Vagina (tissue), 2 donors: ENCODE measurements at regions of chr7 and their contacts with region 1.

Region 1: DNA sequence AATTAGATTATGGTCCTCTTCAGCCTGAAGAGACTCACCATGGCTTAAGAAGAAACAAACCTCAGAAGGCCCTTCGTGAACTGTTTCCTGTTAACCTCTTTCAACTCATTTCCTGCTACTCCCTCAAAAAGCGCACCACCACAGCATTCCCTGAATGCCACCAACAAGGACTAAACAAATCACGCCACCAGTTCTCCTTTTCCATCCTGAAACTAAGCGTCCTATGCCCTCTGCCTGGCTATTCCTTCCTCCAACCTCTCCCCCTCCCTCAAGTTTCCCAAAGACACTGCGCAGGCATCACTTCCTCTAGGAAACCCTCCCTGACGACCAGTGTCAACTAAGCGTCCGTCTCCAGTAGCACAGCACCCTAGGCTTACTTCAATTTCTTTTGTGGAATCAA is 12.0 kb downstream of the YWHAG start:
- DNase-seq: no peak
- H3K4me3 ChIP-seq: no peak overlapping the region
- H3K27ac ChIP-seq: no peak overlapping the region
- H3K4me1 ChIP-seq: peaks cover 31% of the 10 kb centered on the region
- H3K27me3 ChIP-seq: no peaks in the 10 kb centered on the region
- CTCF ChIP-seq: no peak
- POLR2A ChIP-seq: no peak

Region 2: GRCh38 chr7:75696263-75697037 is 650.3 kb before region 1 on chr7:
- intact Hi-C with region 1: no loop called
- DNase-seq: no peak
- H3K4me3 ChIP-seq: no peak overlapping the region
- H3K27ac ChIP-seq: no peak overlapping the region
- H3K4me1 ChIP-seq: no peaks in the 10 kb centered on the region
- H3K27me3 ChIP-seq: no peaks in the 10 kb centered on the region
- CTCF ChIP-seq: no peak
- POLR2A ChIP-seq: no peak

Region 3: DNA sequence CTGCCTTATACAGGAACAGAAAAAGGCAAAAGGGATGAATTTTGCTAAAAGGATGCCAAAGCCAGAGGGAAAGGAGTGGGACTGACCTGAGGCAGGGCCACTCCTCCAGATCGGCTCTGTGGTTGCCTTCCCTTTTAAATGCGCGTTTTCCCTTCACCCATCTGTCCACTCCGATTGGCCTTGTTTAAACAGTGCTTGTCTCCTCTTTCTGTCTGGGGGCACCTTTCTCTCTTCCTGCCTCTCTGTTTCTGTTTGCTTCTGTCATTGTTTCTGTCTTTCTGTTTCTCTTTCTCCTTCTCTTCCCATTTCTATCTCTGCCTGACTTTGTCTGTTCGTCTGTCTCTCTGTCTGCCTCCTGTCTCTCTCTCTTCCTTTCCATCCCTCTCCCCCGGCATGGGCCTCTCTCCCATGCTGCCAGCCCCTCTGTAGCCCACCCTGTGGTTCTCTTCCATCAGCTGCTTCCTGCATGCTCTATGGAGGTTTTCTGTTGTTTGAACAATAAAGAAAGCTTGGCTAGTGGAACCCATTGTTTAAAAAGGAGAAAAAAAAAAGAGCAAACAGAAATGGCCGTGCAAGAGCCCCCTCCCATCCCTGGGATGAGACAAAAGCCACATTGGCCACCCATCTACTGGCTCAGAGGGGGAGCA is 73.8 kb before region 1 on chr7:
- intact Hi-C with region 1: loop called (anchors 1 kb)
- DNase-seq: no peak
- H3K4me3 ChIP-seq: no peak overlapping the region
- H3K27ac ChIP-seq: no peak overlapping the region
- H3K4me1 ChIP-seq: peaks cover 3% of the 10 kb centered on the region
- H3K27me3 ChIP-seq: no peaks in the 10 kb centered on the region
- CTCF ChIP-seq: no peak
- POLR2A ChIP-seq: no peak